CD8-positive, alpha-beta memory T cell (primary cell): ENCODE measurements at regions of chr22 and their contacts with region 1.

Region 1: GRCh38 chr22:35648066-35649025 is at the start of gene APOL6:
- DNase-seq: peak; percentile 31 to 78 (median 67)
- H3K4me3 ChIP-seq: peak within 1 kb of the TSS; percentile 98
- H3K4me3 Mint-ChIP-seq: peak within 1 kb of the TSS; percentile 99 to 100 (median 100)
- H3K27ac ChIP-seq: peak within 1 kb of the TSS; percentile 97
- H3K27ac Mint-ChIP-seq: peak within 1 kb of the TSS; percentile 93 to 100 (median 100)
- H3K4me1 ChIP-seq: peaks cover 33% of the 10 kb centered on the region
- H3K4me1 Mint-ChIP-seq: peaks cover 34 to 59% (median 50%) of the 10 kb centered on the region in 3 donors
- H3K27me3 ChIP-seq: no peaks in the 10 kb centered on the region
- H3K27me3 Mint-ChIP-seq: no peaks in the 10 kb centered on the region
- total RNA-seq, gene APOL6: 27.1 to 27.5 TPM

Region 2: DNA sequence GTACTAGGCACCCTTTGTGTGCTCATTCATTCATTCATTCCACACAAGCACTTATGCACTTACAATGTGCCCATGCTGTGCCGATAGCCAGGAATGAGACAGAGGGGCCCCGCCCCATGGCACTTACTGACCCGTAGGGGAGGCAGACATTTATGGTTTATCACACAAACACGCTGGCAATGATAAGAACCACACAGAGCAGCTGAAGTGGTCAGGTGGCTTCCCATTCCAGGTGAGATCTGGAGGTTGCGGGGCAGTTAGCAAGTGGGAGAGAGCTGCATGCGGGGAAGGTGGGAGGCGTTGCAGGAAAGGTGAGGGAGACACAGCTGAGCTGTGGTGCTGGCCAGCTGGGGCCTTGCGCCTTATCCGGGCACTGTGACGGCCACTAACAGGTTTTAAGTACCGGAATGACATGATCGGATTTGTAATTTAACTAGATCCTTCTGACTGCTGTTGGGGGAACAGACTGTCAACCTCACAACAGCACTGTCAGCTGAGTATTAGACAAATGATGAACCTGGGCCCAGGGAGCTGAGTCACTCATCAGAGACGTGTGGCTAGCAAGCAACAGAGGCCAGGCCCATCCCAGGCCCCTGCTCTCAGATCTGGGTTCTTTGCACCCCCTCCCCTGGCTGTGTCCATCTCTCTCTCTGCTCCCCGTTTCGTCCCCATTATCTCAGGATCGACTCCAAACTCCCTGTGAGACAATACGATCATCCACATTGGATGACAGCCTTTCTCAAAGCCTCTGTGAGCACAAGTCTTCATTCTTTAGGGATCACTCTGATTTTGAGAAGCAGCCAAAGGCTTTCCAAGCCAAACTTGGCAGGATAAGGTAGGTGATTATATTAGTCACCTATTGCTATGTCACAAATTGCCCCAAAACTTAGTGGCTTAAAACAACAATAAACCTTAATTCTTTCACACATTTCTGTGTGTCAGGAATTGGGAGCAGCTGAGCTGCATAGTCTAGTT is 79.3 kb before region 1 on chr22:
- CTCF ChIA-PET with region 1: no interaction called
- POLR2A ChIA-PET with region 1: no interaction called
- DNase-seq: no peak
- H3K4me3 ChIP-seq: no peak overlapping the region
- H3K4me3 Mint-ChIP-seq: no peak overlapping the region
- H3K27ac ChIP-seq: no peak overlapping the region
- H3K27ac Mint-ChIP-seq: peak overlapping the region in 1 of 8 donors; percentile 56
- H3K4me1 ChIP-seq: no peaks in the 10 kb centered on the region
- H3K4me1 Mint-ChIP-seq: no peaks in the 10 kb centered on the region
- H3K27me3 ChIP-seq: no peaks in the 10 kb centered on the region
- H3K27me3 Mint-ChIP-seq: peaks cover 5 to 44% of the 10 kb centered on the region in 2 donors

Region 3: GRCh38 chr22:35660291-35661127 is 12.2 kb after region 1 on chr22:
- CTCF ChIA-PET with region 1: interaction called, 8 read pairs
- POLR2A ChIA-PET with region 1: interaction called, 26 read pairs
- DNase-seq: peak; percentile 52 to 83 (median 74)
- H3K4me3 ChIP-seq: peak overlapping the region; percentile 38
- H3K4me3 Mint-ChIP-seq: peak overlapping the region; percentile 41 to 80 (median 69)
- H3K27ac ChIP-seq: peak overlapping the region; percentile 86
- H3K27ac Mint-ChIP-seq: peak overlapping the region; percentile 90 to 99 (median 97)
- H3K4me1 ChIP-seq: peaks cover 56% of the 10 kb centered on the region
- H3K4me1 Mint-ChIP-seq: peaks cover 78 to 91% (median 88%) of the 10 kb centered on the region in 3 donors
- H3K27me3 ChIP-seq: no peaks in the 10 kb centered on the region
- H3K27me3 Mint-ChIP-seq: no peaks in the 10 kb centered on the region